ENCODE measurements at regions of chr5 and their contacts with region 1.

Region 1: DNA sequence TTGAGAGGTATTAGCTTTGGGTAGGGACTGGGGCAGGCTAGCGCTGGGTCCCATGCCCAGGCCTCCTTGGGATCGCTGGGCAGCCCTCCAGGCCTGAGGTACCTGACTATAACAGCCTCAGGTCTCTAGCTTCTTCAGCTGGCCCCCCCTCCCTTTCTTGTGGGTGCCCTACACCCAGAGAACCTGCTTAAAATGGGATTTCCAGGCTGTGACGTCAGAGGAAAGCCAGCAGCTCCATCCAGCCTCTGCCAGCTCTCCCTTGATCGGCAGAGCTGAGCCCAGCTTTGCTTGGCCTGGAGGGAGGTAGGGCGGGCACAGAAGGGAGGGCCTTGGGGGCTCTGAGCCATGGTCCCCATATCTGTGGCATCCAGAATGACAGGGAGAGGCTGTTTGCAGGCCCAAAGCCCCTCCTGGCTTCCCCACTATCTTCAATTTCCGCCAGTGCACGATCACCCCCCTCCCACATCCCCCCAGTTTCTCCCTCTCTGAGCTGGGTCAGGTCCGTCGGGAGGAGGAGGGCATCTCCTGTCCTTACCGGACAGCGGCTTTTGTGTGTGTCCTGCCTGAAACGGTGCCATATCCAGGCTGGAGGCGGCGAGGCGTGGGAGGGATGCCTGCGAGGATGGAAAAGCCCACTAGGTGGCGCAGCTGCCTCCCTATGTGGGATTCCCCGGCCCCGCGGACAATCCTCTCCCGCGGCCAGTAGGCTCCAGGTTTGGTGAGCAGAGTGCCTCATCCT is 10.8 kb downstream of the REEP2 start:
- DNase-seq: peak; percentile 89
- H3K4me3 Mint-ChIP-seq: peak overlapping the region; percentile 34
- H3K27ac Mint-ChIP-seq: no peak overlapping the region
- H3K4me1 Mint-ChIP-seq: peaks cover 6% of the 10 kb centered on the region
- H3K27me3 Mint-ChIP-seq: peaks cover 1% of the 10 kb centered on the region

Region 2: GRCh38 chr5:137487600-137487999 is 962.1 kb before region 1 on chr5:
- CTCF ChIA-PET with region 1: no interaction called
- intact Hi-C with region 1: no loop called
- DNase-seq: no peak
- H3K4me3 Mint-ChIP-seq: no peak overlapping the region
- H3K27ac Mint-ChIP-seq: no peak overlapping the region
- H3K4me1 Mint-ChIP-seq: no peaks in the 10 kb centered on the region
- H3K27me3 Mint-ChIP-seq: peaks cover 3% of the 10 kb centered on the region

Region 3: GRCh38 chr5:138491669-138492559 is 42.2 kb after region 1 on chr5:
- CTCF ChIA-PET with region 1: interaction called, 12 read pairs
- intact Hi-C with region 1: no loop called
- DNase-seq: peak; percentile 85
- H3K4me3 Mint-ChIP-seq: peak overlapping the region; percentile 89
- H3K27ac Mint-ChIP-seq: no peak overlapping the region
- H3K4me1 Mint-ChIP-seq: peaks cover 11% of the 10 kb centered on the region
- H3K27me3 Mint-ChIP-seq: peaks cover 11% of the 10 kb centered on the region

Region 4: DNA sequence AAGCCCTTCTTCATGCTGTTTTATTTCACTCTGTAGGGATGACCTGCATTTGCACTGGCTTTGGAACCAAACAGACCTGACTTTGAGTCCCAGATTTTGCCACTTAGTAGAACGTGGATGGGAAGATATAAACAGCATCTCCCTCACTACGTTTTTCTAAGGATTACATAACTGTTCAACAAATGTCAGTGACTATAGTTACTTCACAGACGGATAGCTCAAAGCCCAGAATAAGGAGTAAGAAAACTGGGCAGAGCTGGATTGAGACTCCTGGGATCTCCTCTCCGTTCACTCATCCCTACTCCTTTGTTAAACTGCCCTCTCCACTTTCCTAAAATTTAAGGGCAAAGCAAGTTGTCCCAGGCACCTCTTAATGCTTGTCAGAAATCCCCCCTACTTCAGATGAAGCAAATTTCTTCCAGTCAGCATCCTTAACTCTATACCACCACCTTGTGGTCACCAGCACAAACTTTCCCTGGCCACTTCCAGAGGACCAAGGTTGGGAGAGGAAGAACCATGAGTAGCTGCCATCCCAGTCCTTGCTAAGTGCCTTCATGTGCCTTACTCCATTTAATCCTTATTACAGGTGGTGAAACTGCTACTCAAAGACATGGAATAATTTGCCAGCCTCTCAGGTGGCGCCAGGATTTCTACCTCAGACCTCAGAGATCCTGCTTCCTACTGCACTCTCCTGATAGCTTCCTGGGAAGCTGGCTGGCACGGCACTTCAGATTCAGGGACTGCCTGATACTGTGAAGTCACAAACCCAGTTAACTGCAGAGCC is 54.0 kb after region 1 on chr5:
- CTCF ChIA-PET with region 1: interaction called, 104 read pairs
- intact Hi-C with region 1: loop called (anchors 1 kb)
- DNase-seq: peak; percentile 53
- H3K4me3 Mint-ChIP-seq: no peak overlapping the region
- H3K27ac Mint-ChIP-seq: no peak overlapping the region
- H3K4me1 Mint-ChIP-seq: no peaks in the 10 kb centered on the region
- H3K27me3 Mint-ChIP-seq: no peaks in the 10 kb centered on the region

Region 5: GRCh38 chr5:138542956-138543729 is 93.5 kb after region 1 on chr5 and contains the start of gene ETF1:
- CTCF ChIA-PET with region 1: interaction called, 40 read pairs
- intact Hi-C with region 1: no loop called
- DNase-seq: peak; percentile 100
- H3K4me3 Mint-ChIP-seq: peak within 1 kb of the TSS; percentile 100
- H3K27ac Mint-ChIP-seq: peak within 1 kb of the TSS; percentile 100
- H3K4me1 Mint-ChIP-seq: peaks cover 71% of the 10 kb centered on the region
- H3K27me3 Mint-ChIP-seq: no peaks in the 10 kb centered on the region
- total RNA-seq, gene ETF1: 99.8 to 107 TPM